Dorsolateral prefrontal cortex (tissue), 120 donors: ENCODE measurements at regions of chr1 and their contacts with region 1.

Region 1: DNA sequence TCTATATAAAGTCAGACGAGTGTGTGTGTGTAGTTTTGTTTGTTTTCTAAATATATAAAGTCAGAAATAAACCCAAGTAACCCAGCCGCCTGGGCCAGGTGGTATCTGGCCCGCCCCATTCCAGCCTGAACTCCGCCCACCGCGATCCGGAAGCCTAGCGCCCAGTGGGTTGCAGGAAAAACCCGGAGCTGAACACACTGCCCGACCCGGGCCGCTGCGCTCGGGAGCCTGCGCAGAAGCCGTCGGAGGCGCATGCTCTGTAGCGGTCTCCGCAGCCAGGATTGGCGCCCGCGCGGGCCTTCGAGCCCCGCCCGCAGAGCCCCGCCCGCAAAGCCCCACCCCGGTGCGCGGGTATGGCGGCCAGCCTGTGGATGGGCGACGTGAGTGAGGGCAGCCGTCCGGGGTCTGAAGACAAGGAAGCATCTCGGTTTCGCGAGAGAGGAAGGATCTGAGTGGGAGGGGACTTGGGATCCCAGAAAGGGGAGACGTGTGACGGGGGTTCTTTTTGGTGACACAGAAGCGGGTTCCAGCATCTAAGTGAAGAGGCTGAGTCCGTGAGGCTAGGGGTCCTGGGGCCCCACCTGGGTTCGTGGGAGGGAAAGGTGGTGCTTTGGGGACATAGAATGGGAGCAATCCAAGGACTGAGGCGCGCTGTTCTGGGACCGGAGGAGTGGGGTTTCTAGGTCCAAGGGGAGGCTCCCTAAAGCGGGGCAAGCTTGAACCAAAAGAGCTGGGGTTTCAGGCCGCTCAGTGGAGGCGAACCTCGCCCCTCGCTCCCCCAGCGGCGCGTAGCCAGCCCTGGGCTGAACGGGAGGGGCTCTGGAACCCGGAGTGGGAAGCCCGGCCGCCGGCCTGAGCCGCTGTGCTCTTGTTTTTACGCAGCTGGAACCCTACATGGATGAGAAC is at the start of gene TRNAU1AP:
- DNase-seq: peak; percentile 85 to 95 (median 92)
- H3K4me3 ChIP-seq: peak within 1 kb of the TSS; percentile 68 to 98 (median 91)
- H3K27ac ChIP-seq: peak within 1 kb of the TSS; percentile 56 to 98 (median 91)
- H3K27me3 ChIP-seq: no peaks in the 10 kb centered on the region
- CTCF ChIP-seq: peak in 34 of 56 donors; percentile 4 to 60 (median 30)
- total RNA-seq, gene TRNAU1AP: 20.5 to 49.2 (median 32.7) TPM

Region 2: GRCh38 chr1:28581536-28582247 is 28.7 kb after region 1 on chr1:
- intact Hi-C with region 1: loop called (anchors 1 to 2 kb)
- DNase-seq: peak; percentile 94 to 98 (median 97)
- H3K4me3 ChIP-seq: peak overlapping the region; percentile 71 to 100 (median 94)
- H3K27ac ChIP-seq: peak overlapping the region; percentile 14 to 97 (median 86)
- H3K27me3 ChIP-seq: no peaks in the 10 kb centered on the region
- CTCF ChIP-seq: peak in 45 of 56 donors; percentile 8 to 63 (median 38)